Transverse colon (tissue), 4 donors: ENCODE measurements at regions of chr2 and their contacts with region 1.

Region 1: DNA sequence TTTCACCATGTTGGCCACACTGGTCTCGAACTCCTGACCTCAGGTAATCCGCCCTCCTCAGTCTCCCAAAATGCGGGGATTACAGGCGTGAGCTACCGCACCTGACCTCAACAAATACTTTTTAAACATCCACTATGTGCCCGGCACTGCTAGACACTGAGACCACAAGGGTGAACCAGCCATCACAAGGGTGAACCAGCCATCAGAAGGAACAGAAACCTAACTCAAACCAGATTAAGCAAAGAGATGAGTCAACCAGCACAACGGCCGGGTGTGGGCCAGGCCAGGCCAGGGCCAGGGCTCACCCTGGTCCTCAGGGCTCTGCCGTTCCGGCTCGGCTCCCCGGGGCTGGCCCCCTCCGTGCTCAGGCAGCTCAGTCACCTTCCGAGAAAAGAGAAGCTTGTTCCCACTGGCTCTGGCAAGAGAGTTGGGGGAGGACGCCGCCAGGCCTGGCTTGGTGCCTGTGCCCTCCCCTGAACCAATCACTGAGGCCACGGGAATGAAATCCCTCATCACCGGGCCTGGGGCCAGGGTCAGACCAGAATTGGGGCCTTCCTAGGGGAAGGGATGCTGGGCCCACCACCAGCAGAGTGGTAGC is 4.4 kb downstream of the TEX44 start:
- DNase-seq: no peak
- H3K4me3 ChIP-seq: no peak overlapping the region
- H3K27ac ChIP-seq: no peak overlapping the region
- H3K4me1 ChIP-seq: peaks cover 0 to 13% (median 0%) of the 10 kb centered on the region in 4 donors
- H3K27me3 ChIP-seq: no peaks in the 10 kb centered on the region
- CTCF ChIP-seq: no peak
- EP300 ChIP-seq: no peak
- POLR2A ChIP-seq: no peak

Region 2: GRCh38 chr2:231526341-231527090 is 70.6 kb before region 1 on chr2:
- in situ Hi-C with region 1: no loop called
- intact Hi-C with region 1: loop called (anchors 2 kb)
- DNase-seq: no peak
- H3K4me3 ChIP-seq: no peak overlapping the region
- H3K27ac ChIP-seq: no peak overlapping the region
- H3K4me1 ChIP-seq: peaks cover 3 to 25% (median 10%) of the 10 kb centered on the region in 4 donors
- H3K27me3 ChIP-seq: peaks cover 17% of the 10 kb centered on the region
- CTCF ChIP-seq: no peak
- EP300 ChIP-seq: no peak
- POLR2A ChIP-seq: no peak